PC-3 (cell line): ENCODE measurements at regions of chr19 and their contacts with region 1.

Region 1: DNA sequence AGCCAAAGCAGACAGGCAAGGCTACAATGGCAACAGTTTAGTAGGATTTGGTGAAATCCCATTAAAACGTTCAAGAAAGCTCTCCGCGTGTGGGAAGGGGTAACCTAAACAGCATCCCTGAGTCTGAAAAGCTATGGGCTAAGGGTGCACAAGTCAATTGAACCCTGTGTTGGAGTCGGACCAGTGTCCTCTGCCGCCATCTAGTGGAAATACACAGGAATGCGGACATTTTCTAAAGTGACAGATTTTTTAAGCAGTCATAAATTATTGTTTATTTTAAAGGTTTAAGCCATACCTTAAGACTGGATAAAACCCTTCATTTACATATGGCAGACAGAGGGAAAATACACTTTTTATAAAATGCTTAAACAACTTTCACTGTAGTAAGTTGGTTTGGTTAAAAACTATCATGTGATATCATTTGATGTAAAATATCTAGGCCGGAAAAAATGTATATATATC is 26.5 kb upstream of the LSM14A start:
- DNase-seq: peak; percentile 64
- ATAC-seq: 0 out of 2 replicates have a peak, but pooled peaks have one; percentile 15
- H3K4me3 ChIP-seq: no peak overlapping the region
- H3K27ac ChIP-seq: no peak overlapping the region
- H3K4me1 ChIP-seq: no peaks in the 10 kb centered on the region
- H3K27me3 ChIP-seq: no peaks in the 10 kb centered on the region
- CTCF ChIP-seq: peak; percentile 78

Region 2: DNA sequence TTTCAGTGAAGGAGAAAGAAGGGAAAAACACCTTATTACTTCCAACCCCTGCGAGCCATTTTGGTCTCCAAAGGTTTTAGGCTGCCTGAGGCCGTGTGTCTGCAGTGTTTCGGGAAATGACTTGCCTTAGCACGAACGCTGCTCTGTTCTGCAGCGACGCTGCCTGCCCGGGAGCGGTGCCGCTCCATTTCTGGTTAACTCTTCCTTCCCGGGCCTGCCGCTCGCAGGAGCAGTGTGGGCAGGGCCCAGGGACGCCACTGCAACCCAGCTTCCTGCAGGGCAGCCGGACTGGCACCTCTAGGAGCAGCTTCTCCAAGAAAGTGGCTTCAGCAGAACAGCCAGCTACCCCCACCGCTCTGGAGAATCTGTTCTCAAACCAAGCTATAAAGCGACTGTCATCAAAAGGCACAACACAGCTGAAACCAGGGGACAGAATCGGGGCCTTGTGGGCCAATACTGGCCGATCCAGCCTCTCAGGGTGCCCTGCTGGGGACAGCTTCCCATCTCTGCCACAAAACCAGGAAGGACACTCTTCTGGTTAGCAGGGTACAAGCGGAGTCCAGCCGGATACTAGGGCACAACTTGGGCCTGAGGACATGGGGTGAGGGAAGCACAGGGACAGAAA is 276.9 kb before region 1 on chr19:
- CTCF ChIA-PET with region 1: no interaction called
- POLR2A ChIA-PET with region 1: no interaction called
- intact Hi-C with region 1: no loop called
- DNase-seq: no peak
- ATAC-seq: no peak
- H3K4me3 ChIP-seq: no peak overlapping the region
- H3K27ac ChIP-seq: no peak overlapping the region
- H3K4me1 ChIP-seq: no peaks in the 10 kb centered on the region
- H3K27me3 ChIP-seq: no peaks in the 10 kb centered on the region
- CTCF ChIP-seq: no peak

Region 3: GRCh38 chr19:34120846-34121639 is 24.7 kb before region 1 on chr19:
- CTCF ChIA-PET with region 1: interaction called, 3 read pairs
- POLR2A ChIA-PET with region 1: no interaction called
- intact Hi-C with region 1: loop called (anchors 1 kb)
- DNase-seq: peak; percentile 44
- ATAC-seq: no peak
- H3K4me3 ChIP-seq: no peak overlapping the region
- H3K27ac ChIP-seq: no peak overlapping the region
- H3K4me1 ChIP-seq: no peaks in the 10 kb centered on the region
- H3K27me3 ChIP-seq: no peaks in the 10 kb centered on the region
- CTCF ChIP-seq: peak; percentile 77